ENCODE measurements at regions of chr10 and their contacts with region 1.

Region 1: DNA sequence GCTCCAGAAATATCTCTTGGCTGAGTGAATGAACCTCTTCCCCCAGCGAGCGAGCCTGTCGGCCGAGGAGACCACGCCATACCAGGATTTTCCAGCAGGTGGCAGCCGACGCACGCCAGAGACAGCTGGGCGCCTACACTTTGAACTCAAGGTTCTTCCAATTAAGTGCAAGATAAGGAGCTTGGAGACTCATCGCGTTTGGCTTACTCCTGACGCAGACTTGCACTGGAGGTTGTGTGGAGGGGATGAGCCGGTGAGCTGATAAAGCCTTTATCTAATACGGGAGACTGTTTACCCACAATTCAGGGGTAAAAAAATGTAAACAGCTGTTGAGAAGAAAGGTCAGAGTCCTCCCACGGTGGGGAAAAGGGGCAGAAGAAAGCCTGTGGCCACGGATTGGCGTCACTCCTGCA is 45.9 kb upstream of the EMX2 start:
- DNase-seq: no peak
- ATAC-seq: peak; percentile 87
- H3K4me3 ChIP-seq: no peak overlapping the region
- H3K27ac ChIP-seq: no peak overlapping the region
- H3K4me1 ChIP-seq: no peaks in the 10 kb centered on the region
- H3K27me3 ChIP-seq: peaks cover 0 to 2% of the 10 kb centered on the region in 2 experiments; a peak in 2 of 4 replicates
- CTCF ChIP-seq: peak; percentile 91 to 97 (median 91)
- EP300 ChIP-seq: no peak
- POLR2A ChIP-seq: no peak
- RAD21 ChIP-seq: peak; percentile 98

Region 2: DNA sequence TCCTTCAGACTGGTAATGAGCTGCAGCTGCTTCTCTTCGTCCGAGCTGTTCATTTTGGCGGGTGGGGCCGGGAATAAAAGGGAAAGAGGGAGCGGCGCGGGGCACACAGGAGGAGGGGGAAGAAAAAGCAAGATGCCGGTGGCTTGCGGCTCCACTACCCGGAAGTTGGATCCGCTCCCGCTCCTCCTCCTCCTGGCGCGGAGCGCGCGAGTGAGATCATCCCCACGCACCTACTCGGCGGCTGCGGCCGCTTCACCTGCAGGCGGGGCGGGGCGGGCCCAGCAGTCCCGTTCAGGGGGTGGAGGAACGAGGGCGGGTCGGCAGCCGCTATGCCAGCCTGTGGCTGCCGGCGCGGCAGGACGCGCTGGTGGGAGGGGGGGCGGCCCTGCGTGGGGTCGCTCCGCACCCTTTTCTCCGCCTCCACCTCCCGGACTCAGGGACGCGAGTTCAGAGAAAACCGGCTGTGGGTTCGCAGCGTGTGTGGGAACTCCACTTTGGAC is 491.5 kb before region 1 on chr10 and contains the start of gene SHTN1:
- CTCF ChIA-PET with region 1: no interaction called
- POLR2A ChIA-PET with region 1: no interaction called
- RAD21 ChIA-PET with region 1: no interaction called
- SMC1A ChIA-PET with region 1: no interaction called
- in situ Hi-C with region 1: no loop called
- intact Hi-C with region 1: no loop called
- DNase-seq: no peak
- ATAC-seq: peak; percentile 77
- H3K4me3 ChIP-seq: peak within 1 kb of the TSS; percentile 46; the same call in 1 of the 2 replicates
- H3K27ac ChIP-seq: no peak within 1 kb of the TSS
- H3K4me1 ChIP-seq: no peaks in the 10 kb centered on the region
- H3K27me3 ChIP-seq: peaks cover 3 to 9% of the 10 kb centered on the region in 2 experiments; a peak in 3 of 4 replicates
- CTCF ChIP-seq: no peak
- EP300 ChIP-seq: no peak
- POLR2A ChIP-seq: no peak
- RAD21 ChIP-seq: no peak
- polyA plus RNA-seq, gene SHTN1: 1.4 to 1.9 TPM

Region 3: DNA sequence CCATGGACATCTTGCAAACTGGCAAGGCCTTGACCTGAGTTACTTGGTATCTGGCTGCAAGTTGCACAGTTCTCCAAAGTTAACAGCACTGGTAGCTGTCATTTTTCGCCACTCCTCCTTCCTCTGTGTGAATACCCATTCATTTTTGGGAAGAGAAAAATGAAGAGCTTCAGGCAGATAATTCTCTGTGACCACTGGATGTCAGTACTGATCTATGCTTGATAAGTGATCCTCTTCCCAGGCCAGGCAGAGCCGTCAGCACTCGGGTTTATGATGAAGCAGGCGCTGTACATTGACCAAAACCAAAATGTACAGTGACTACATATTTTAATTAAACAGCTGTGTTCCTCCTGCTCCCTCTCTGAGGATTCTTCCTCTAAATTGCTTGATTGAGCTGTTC is 65.5 kb before region 1 on chr10:
- CTCF ChIA-PET with region 1: interaction called, 15 read pairs
- POLR2A ChIA-PET with region 1: no interaction called
- RAD21 ChIA-PET with region 1: interaction called, 5 read pairs
- SMC1A ChIA-PET with region 1: interaction called, 8 read pairs
- in situ Hi-C with region 1: no loop called
- intact Hi-C with region 1: no loop called
- DNase-seq: no peak
- ATAC-seq: peak; percentile 41; the same call in 2 of the 3 replicates
- H3K4me3 ChIP-seq: no peak overlapping the region
- H3K27ac ChIP-seq: no peak overlapping the region
- H3K4me1 ChIP-seq: no peaks in the 10 kb centered on the region
- H3K27me3 ChIP-seq: peaks cover 0 to 2% of the 10 kb centered on the region in 2 experiments; a peak in 2 of 4 replicates
- CTCF ChIP-seq: peak in 1 of 3 experiments; percentile 25; a peak in 1 of 6 replicates
- EP300 ChIP-seq: no peak
- POLR2A ChIP-seq: no peak
- RAD21 ChIP-seq: no peak

Region 4: GRCh38 chr10:117477961-117478670 is 18.5 kb before region 1 on chr10:
- CTCF ChIA-PET with region 1: interaction called, 14 read pairs
- POLR2A ChIA-PET with region 1: no interaction called
- RAD21 ChIA-PET with region 1: interaction called, 14 read pairs
- SMC1A ChIA-PET with region 1: interaction called, 10 read pairs
- in situ Hi-C with region 1: no loop called
- intact Hi-C with region 1: no loop called
- DNase-seq: no peak
- ATAC-seq: 0 out of 3 replicates have a peak, but pooled peaks have one; percentile 7
- H3K4me3 ChIP-seq: no peak overlapping the region
- H3K27ac ChIP-seq: no peak overlapping the region
- H3K4me1 ChIP-seq: 0 out of 2 replicates have a peak, but pooled peaks cover 4% of the 10 kb centered on the region
- H3K27me3 ChIP-seq: no peaks in the 10 kb centered on the region; a peak in 1 of 4 replicates
- CTCF ChIP-seq: peak in 2 of 3 experiments; percentile 8 to 10; a peak in 1 of 6 replicates
- EP300 ChIP-seq: no peak
- POLR2A ChIP-seq: no peak
- RAD21 ChIP-seq: no peak

Region 5: DNA sequence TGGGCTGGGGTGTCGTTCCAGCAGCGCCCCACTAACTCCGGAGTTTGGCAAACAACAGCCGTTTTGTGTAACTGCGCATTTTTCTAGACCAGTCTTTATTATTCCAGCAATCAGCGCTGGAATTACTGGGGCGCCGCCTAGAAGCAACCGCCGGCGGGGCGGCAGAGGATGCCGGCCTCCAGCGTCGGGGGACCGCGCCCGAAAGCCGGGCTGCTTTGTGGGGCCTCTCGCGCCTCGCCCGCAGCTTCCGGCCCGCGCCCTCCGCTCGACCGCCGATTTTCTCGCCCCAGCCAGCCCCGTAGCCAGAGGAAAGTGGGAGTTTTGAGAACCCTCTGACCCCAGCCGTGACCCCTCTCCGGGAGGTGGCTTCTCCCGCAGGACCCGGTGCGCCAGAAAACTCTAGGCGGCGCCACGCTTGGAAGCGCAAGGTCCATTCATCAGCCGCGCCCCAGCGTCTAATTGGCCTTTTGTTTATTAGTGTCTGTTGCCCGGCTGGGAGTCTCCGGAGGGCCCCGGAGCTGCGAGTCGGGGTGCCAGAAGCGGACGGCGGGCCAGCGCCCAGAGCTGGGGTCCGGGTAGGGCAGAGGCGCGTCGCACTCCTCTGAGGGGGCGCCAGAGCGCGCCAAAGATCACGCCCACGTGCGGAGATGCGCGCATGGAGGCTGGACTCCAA is 56.7 kb after region 1 on chr10:
- CTCF ChIA-PET with region 1: no interaction called
- POLR2A ChIA-PET with region 1: no interaction called
- RAD21 ChIA-PET with region 1: no interaction called
- SMC1A ChIA-PET with region 1: no interaction called
- in situ Hi-C with region 1: no loop called
- intact Hi-C with region 1: no loop called
- DNase-seq: no peak
- ATAC-seq: no peak
- H3K4me3 ChIP-seq: no peak overlapping the region
- H3K27ac ChIP-seq: no peak overlapping the region
- H3K4me1 ChIP-seq: no peaks in the 10 kb centered on the region
- H3K27me3 ChIP-seq: peaks cover 25 to 26% of the 10 kb centered on the region in 2 experiments
- CTCF ChIP-seq: no peak
- EP300 ChIP-seq: no peak
- POLR2A ChIP-seq: no peak
- RAD21 ChIP-seq: no peak

Region 6: DNA sequence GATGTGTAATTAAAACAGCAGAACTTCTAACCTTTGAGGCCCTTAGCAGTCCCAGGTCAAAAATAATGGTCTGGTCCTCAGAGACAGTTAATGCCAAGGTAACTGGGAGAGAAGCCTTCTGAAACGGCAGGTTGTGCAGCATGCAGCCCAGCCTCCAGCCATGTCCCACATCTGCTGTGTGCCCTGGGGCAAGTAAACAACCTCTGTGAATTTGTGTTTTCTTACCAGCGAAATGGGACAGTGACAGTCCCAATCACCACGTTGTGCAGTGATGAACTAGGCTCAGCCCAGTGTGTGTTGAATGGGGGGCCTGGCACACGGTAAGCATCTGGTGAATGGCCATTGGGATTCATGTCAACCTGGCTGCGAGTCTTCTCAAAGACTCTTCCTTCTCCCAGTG is 107.1 kb after region 1 on chr10:
- CTCF ChIA-PET with region 1: no interaction called
- POLR2A ChIA-PET with region 1: no interaction called
- RAD21 ChIA-PET with region 1: no interaction called
- SMC1A ChIA-PET with region 1: no interaction called
- in situ Hi-C with region 1: no loop called
- intact Hi-C with region 1: no loop called
- DNase-seq: no peak
- ATAC-seq: no peak
- H3K4me3 ChIP-seq: no peak overlapping the region
- H3K27ac ChIP-seq: no peak overlapping the region
- H3K4me1 ChIP-seq: no peaks in the 10 kb centered on the region
- H3K27me3 ChIP-seq: peaks cover 3 to 5% of the 10 kb centered on the region in 2 experiments; a peak in 3 of 4 replicates
- CTCF ChIP-seq: no peak
- EP300 ChIP-seq: no peak
- POLR2A ChIP-seq: no peak
- RAD21 ChIP-seq: no peak

Region 7: DNA sequence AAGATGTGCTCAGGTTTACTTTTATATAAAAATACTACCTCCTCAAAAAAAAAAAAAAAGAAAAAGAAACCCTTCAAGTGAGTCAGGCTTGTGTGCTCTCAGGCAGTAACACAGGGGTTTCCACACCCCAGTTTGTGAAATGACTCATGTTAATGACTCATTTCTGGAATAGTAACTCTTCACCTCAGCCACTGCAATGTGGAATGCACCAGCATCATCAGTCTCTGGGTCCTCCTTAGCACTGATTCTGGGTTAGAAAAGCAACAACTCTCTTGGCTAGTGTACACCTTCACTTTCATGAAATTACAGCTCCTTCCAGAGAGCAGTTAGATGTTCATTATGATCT is 156.5 kb after region 1 on chr10:
- CTCF ChIA-PET with region 1: interaction called, 14 read pairs
- POLR2A ChIA-PET with region 1: no interaction called
- RAD21 ChIA-PET with region 1: interaction called, 5 read pairs
- SMC1A ChIA-PET with region 1: interaction called, 7 read pairs
- in situ Hi-C with region 1: no loop called
- intact Hi-C with region 1: no loop called
- DNase-seq: peak; percentile 98
- ATAC-seq: peak; percentile 87
- H3K4me3 ChIP-seq: no peak overlapping the region
- H3K27ac ChIP-seq: peak overlapping the region; percentile 75
- H3K4me1 ChIP-seq: peaks cover 46% of the 10 kb centered on the region
- H3K27me3 ChIP-seq: no peaks in the 10 kb centered on the region
- CTCF ChIP-seq: no peak
- EP300 ChIP-seq: peak; percentile 99
- POLR2A ChIP-seq: no peak
- RAD21 ChIP-seq: peak; percentile 17; the same call in 1 of the 2 replicates

Region 8: DNA sequence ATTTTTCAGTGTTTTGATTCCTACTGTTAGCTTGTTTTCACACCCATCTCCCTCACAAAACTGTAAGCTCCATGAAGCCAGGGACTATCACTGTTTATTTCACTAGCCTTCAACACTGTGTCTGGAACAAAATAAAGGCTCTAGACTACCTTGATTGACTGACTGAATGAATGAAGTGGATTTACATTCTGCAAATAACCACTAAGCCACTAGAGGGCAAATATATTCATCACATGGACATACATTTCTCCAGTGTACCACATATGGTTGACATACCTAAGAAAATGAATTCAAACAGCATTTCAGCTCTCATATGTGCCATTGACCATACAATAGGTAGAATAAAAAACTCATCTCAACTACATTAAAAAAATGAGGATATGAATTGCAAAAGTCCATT is 364.2 kb after region 1 on chr10:
- CTCF ChIA-PET with region 1: interaction called, 3 read pairs
- POLR2A ChIA-PET with region 1: no interaction called
- RAD21 ChIA-PET with region 1: no interaction called
- SMC1A ChIA-PET with region 1: no interaction called
- in situ Hi-C with region 1: no loop called
- intact Hi-C with region 1: loop called (anchors 5 kb)
- DNase-seq: no peak
- ATAC-seq: peak; percentile 68
- H3K4me3 ChIP-seq: no peak overlapping the region
- H3K27ac ChIP-seq: no peak overlapping the region
- H3K4me1 ChIP-seq: no peaks in the 10 kb centered on the region
- H3K27me3 ChIP-seq: no peaks in the 10 kb centered on the region
- CTCF ChIP-seq: peak; percentile 27 to 59 (median 44); a peak in 4 of 6 replicates
- EP300 ChIP-seq: no peak
- POLR2A ChIP-seq: no peak
- RAD21 ChIP-seq: peak; percentile 39

Region 9: DNA sequence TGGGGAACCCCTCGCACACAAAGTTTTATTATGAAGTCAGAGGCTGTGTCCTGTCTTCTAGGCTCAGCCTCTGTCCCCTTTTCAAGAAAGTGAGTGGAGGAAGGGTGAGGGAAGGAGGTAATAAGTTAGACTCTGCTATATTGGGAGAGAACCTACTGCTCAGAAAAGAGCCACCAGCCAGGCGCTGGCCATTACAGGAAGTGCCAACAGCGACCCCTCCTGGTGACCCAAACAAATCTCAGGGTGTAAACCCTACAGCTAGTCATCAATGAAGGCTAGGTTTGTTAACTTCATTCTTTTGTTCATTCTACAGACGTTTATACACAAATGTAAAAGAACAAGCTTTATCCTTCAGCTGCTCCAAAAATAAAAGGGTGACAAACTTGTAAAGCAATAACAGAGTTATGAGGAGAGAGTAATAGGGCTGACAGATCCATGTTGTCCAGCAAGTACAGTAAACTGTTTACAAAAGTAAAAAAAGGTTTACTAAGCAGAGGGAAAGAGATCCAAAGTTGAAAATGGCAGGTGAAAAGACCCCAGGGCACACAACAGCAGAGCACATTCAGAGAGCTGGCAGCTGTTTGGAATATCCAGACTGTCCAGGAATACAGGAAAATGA is 762.8 kb after region 1 on chr10:
- CTCF ChIA-PET with region 1: interaction called, 33 read pairs
- POLR2A ChIA-PET with region 1: no interaction called
- RAD21 ChIA-PET with region 1: interaction called, 15 read pairs
- SMC1A ChIA-PET with region 1: interaction called, 10 read pairs
- in situ Hi-C with region 1: no loop called
- intact Hi-C with region 1: no loop called
- DNase-seq: no peak
- ATAC-seq: peak; percentile 79
- H3K4me3 ChIP-seq: no peak overlapping the region
- H3K27ac ChIP-seq: no peak overlapping the region
- H3K4me1 ChIP-seq: no peaks in the 10 kb centered on the region
- H3K27me3 ChIP-seq: peaks cover 0 to 1% of the 10 kb centered on the region in 2 experiments; a peak in 2 of 4 replicates
- CTCF ChIP-seq: peak; percentile 60 to 65 (median 62)
- EP300 ChIP-seq: no peak
- POLR2A ChIP-seq: no peak
- RAD21 ChIP-seq: peak; percentile 32